CD4-positive, alpha-beta T cell (primary cell): ENCODE measurements at regions of chr15 and their contacts with region 1.

Region 1: GRCh38 chr15:91049378-91050127 is 27.2 kb upstream of the VPS33B start:
- DNase-seq: peak in 12 of 14 experiments; percentile 2 to 75 (median 50)
- ATAC-seq: peak; percentile 90
- H3K4me3 ChIP-seq: no peak overlapping the region
- H3K4me3 Mint-ChIP-seq: no peak overlapping the region
- H3K27ac ChIP-seq: no peak overlapping the region
- H3K27ac Mint-ChIP-seq: no peak overlapping the region
- H3K4me1 ChIP-seq: peaks cover 9% of the 10 kb centered on the region
- H3K4me1 Mint-ChIP-seq: peaks cover 30% of the 10 kb centered on the region
- H3K27me3 ChIP-seq: peaks cover 0 to 3% of the 10 kb centered on the region in 2 experiments
- H3K27me3 Mint-ChIP-seq: peaks cover 16% of the 10 kb centered on the region
- CTCF ChIP-seq: peak; percentile 55

Region 2: GRCh38 chr15:92077353-92078085 is 1028.0 kb after region 1 on chr15:
- CTCF ChIA-PET with region 1: no interaction called
- POLR2A ChIA-PET with region 1: no interaction called
- intact Hi-C with region 1: loop called in 1 of 2 experiments (anchors 10 kb)
- DNase-seq: peak; percentile 36 to 75 (median 46)
- ATAC-seq: peak; percentile 73
- H3K4me3 ChIP-seq: no peak overlapping the region
- H3K4me3 Mint-ChIP-seq: no peak overlapping the region
- H3K27ac ChIP-seq: no peak overlapping the region
- H3K27ac Mint-ChIP-seq: no peak overlapping the region
- H3K4me1 ChIP-seq: peaks cover 34% of the 10 kb centered on the region
- H3K4me1 Mint-ChIP-seq: peaks cover 33% of the 10 kb centered on the region
- H3K27me3 ChIP-seq: no peaks in the 10 kb centered on the region
- H3K27me3 Mint-ChIP-seq: no peaks in the 10 kb centered on the region
- CTCF ChIP-seq: peak; percentile 64